ENCODE measurements at regions of chr6 and their contacts with region 1.

Region 1: DNA sequence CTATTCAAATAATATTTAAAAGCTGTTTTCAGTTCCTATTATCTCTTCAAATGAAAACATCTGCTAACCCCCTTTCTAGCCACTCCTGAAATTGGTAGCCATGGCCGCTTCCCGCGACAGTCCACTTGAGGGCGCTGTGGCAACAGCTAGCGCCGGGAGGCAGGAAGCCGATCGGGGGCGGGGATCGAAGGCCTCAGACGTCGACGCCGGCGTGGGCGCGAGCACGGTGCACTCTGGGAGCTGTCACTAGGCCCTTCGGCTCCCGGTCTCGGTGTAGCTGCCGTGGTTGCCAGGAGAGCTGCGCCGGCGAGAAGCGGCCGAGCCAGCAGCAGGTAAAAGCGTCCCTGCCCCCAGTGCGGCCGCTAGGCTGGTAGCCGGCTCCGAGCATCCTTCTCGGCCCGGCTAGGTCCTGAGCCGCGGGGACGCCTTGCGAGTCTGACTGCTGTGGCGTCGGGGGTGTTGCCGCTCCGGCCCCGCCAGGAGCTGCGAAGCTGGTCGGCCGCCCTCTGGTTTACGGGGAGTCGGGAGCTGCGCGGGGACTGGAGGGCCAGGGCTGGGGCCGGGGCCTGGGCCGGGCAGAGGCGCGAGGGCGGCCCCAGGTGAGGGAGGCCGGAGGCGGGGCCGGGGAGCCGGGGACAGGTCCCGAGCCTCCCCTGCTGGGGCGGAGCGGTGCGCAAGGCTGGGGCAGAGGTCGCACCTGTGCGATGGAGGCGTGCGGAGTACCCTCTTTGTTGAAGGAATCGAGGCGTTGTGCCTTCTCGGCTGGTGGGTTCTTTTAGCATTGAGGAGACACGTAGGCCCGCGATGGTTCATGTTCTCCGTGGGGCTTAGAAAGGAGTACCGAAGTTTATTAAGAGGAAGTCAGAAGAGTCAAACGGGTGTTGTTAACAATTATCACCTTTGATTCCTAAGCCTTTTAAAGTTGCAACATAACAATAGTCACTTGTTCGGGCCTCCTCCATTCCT is at the start of gene DOP1A:
- DNase-seq: peak; percentile 95
- H3K4me3 ChIP-seq: peak within 1 kb of the TSS; percentile 96
- H3K4me3 Mint-ChIP-seq: peak within 1 kb of the TSS; percentile 87
- H3K27ac Mint-ChIP-seq: peak within 1 kb of the TSS; percentile 85
- H3K4me1 ChIP-seq: peaks cover 5% of the 10 kb centered on the region; the same call in 1 of the 2 replicates
- H3K4me1 Mint-ChIP-seq: peaks cover 5% of the 10 kb centered on the region
- H3K27me3 ChIP-seq: no peaks in the 10 kb centered on the region
- H3K27me3 Mint-ChIP-seq: no peaks in the 10 kb centered on the region
- CTCF ChIP-seq: peak; percentile 82 to 95
- total RNA-seq, gene DOP1A: 14.6 and 16.1 TPM in 2 replicates

Region 2: GRCh38 chr6:82247634-82248232 is 820.0 kb before region 1 on chr6 and contains the start of gene IBTK:
- CTCF ChIA-PET with region 1: interaction called, 4 read pairs
- POLR2A ChIA-PET with region 1: no interaction called
- intact Hi-C with region 1: loop called (anchors 5 kb)
- DNase-seq: peak; percentile 95 to 97
- H3K4me3 ChIP-seq: peak within 1 kb of the TSS; percentile 74
- H3K4me3 Mint-ChIP-seq: peak within 1 kb of the TSS; percentile 90
- H3K27ac Mint-ChIP-seq: peak within 1 kb of the TSS; percentile 96
- H3K4me1 ChIP-seq: peaks cover 28% of the 10 kb centered on the region
- H3K4me1 Mint-ChIP-seq: peaks cover 20% of the 10 kb centered on the region
- H3K27me3 ChIP-seq: no peaks in the 10 kb centered on the region
- H3K27me3 Mint-ChIP-seq: no peaks in the 10 kb centered on the region
- CTCF ChIP-seq: no peak
- total RNA-seq, gene IBTK: 29.4 and 30.3 TPM in 2 replicates

Region 3: DNA sequence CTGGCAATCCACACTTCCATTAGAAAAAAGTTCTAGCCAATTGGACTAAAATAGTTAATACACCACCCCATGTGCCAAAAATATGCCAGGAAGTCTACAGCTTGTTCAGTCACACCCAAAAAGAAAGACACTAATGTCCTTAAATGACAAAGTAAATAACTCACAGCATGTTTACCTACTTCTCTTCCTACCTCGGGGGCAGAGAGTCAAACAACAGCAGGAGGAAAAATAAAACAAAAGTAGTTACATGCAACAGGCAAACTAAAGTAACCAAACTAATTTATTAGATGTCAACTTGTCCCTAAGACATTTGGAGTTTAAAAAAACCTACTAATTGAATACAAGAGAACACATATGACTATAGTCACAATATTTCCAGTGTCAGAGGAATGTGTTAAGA is 59.1 kb before region 1 on chr6:
- CTCF ChIA-PET with region 1: no interaction called
- POLR2A ChIA-PET with region 1: no interaction called
- intact Hi-C with region 1: no loop called
- DNase-seq: no peak
- H3K4me3 ChIP-seq: no peak overlapping the region
- H3K4me3 Mint-ChIP-seq: no peak overlapping the region
- H3K27ac Mint-ChIP-seq: no peak overlapping the region
- H3K4me1 ChIP-seq: no peaks in the 10 kb centered on the region
- H3K4me1 Mint-ChIP-seq: peaks cover 12% of the 10 kb centered on the region
- H3K27me3 ChIP-seq: no peaks in the 10 kb centered on the region
- H3K27me3 Mint-ChIP-seq: no peaks in the 10 kb centered on the region
- CTCF ChIP-seq: no peak

Region 4: DNA sequence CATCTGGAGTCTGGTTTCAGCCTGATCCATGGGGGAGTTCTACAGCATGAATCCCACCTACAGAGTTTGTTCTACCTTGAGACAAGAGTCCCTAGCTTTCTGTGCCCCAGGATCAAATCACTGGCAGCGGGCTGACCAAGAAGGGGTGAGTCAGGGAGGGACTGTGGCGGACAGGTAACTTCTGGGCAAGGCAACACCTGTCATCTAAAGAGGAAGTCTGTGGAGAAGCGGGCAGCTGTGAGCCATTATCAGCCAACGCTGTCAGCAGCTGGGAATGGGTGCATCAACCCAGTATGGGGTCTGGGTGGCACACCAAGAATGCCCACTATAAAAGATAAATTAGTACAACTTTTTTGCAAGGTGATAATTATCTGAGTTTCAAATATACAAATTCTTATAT is 48.0 kb before region 1 on chr6:
- CTCF ChIA-PET with region 1: no interaction called
- POLR2A ChIA-PET with region 1: no interaction called
- intact Hi-C with region 1: no loop called
- DNase-seq: no peak
- H3K4me3 ChIP-seq: no peak overlapping the region
- H3K4me3 Mint-ChIP-seq: no peak overlapping the region
- H3K27ac Mint-ChIP-seq: no peak overlapping the region
- H3K4me1 ChIP-seq: no peaks in the 10 kb centered on the region
- H3K4me1 Mint-ChIP-seq: no peaks in the 10 kb centered on the region
- H3K27me3 ChIP-seq: no peaks in the 10 kb centered on the region
- H3K27me3 Mint-ChIP-seq: no peaks in the 10 kb centered on the region
- CTCF ChIP-seq: no peak

Region 5: GRCh38 chr6:83138118-83138722 is 70.5 kb after region 1 on chr6:
- CTCF ChIA-PET with region 1: no interaction called
- POLR2A ChIA-PET with region 1: no interaction called
- intact Hi-C with region 1: loop called (anchors 1 kb)
- DNase-seq: no peak
- H3K4me3 ChIP-seq: no peak overlapping the region
- H3K4me3 Mint-ChIP-seq: no peak overlapping the region
- H3K27ac Mint-ChIP-seq: no peak overlapping the region
- H3K4me1 ChIP-seq: peaks cover 16% of the 10 kb centered on the region
- H3K4me1 Mint-ChIP-seq: peaks cover 8% of the 10 kb centered on the region
- H3K27me3 ChIP-seq: no peaks in the 10 kb centered on the region
- H3K27me3 Mint-ChIP-seq: no peaks in the 10 kb centered on the region
- CTCF ChIP-seq: no peak

Region 6: GRCh38 chr6:83192871-83193746 is 125.4 kb after region 1 on chr6 and contains the starts of genes PGM3 and RWDD2A:
- CTCF ChIA-PET with region 1: interaction called, 4 read pairs
- POLR2A ChIA-PET with region 1: interaction called, 3 read pairs
- intact Hi-C with region 1: loop called (anchors 1 kb)
- DNase-seq: peak; percentile 89 to 94
- H3K4me3 ChIP-seq: peak within 1 kb of the TSS; percentile 97
- H3K4me3 Mint-ChIP-seq: peak within 1 kb of the TSS; percentile 90
- H3K27ac Mint-ChIP-seq: peak within 1 kb of the TSS; percentile 92
- H3K4me1 ChIP-seq: peaks cover 24% of the 10 kb centered on the region
- H3K4me1 Mint-ChIP-seq: peaks cover 16% of the 10 kb centered on the region
- H3K27me3 ChIP-seq: no peaks in the 10 kb centered on the region
- H3K27me3 Mint-ChIP-seq: no peaks in the 10 kb centered on the region
- CTCF ChIP-seq: no peak
- total RNA-seq, gene PGM3: 96.4 and 97.0 TPM in 2 replicates
- total RNA-seq, gene RWDD2A: 3.5 and 3.6 TPM in 2 replicates

Region 7: DNA sequence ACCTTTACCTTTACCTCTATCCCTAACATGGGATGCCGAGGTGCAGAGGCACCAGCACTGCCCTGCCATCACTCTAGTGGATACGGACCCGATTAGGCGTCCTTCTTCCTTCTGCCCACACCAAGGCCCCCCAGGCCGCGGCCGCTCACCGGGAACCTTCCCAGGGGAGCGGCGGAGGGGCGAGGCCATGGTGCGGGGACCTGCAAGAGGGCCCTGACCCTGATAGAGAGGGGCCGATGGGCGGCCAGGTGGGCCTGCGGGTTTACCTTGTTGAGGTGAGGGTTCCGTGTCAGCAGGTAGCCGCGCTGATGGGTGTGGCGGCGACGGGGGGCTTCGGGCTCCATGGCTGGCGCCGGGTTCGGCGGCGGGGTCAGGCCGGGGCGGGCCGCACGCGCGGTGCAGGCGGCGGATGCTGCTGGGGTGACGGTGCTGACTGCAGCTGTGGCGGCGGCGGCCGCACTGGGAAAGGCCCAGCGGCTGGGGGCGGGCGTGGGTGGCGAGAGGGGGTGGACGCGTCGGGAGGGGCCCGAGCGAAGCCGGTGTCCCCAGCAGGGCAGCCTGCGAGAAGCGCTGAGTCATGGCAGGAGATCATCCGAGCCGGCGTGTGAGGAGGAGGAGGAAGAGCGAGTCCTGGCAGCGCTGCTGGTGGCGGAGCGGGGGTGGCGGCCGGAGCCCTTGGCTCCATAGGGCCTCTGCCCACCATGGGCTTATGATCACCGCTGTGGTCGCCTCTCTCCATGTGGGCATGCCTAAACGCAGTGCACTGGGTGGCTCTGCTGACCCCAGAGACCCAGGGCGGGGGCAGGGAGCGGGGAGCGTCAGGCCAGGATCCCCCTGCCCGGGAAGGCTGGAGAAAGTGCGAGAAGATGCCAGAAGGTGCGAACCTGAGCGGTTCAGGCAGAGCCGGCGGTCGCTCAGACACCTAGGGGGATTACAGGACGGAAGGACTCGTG is 363.2 kb after region 1 on chr6 and contains the start of gene ME1:
- CTCF ChIA-PET with region 1: no interaction called
- POLR2A ChIA-PET with region 1: no interaction called
- intact Hi-C with region 1: loop called (anchors 2 kb)
- DNase-seq: peak; percentile 91 to 94
- H3K4me3 ChIP-seq: peak within 1 kb of the TSS; percentile 79
- H3K4me3 Mint-ChIP-seq: peak within 1 kb of the TSS; percentile 100
- H3K27ac Mint-ChIP-seq: peak within 1 kb of the TSS; percentile 99
- H3K4me1 ChIP-seq: peaks cover 41% of the 10 kb centered on the region
- H3K4me1 Mint-ChIP-seq: peaks cover 25% of the 10 kb centered on the region
- H3K27me3 ChIP-seq: no peaks in the 10 kb centered on the region
- H3K27me3 Mint-ChIP-seq: no peaks in the 10 kb centered on the region
- CTCF ChIP-seq: no peak
- total RNA-seq, gene ME1: 121 and 131 TPM in 2 replicates

Region 8: DNA sequence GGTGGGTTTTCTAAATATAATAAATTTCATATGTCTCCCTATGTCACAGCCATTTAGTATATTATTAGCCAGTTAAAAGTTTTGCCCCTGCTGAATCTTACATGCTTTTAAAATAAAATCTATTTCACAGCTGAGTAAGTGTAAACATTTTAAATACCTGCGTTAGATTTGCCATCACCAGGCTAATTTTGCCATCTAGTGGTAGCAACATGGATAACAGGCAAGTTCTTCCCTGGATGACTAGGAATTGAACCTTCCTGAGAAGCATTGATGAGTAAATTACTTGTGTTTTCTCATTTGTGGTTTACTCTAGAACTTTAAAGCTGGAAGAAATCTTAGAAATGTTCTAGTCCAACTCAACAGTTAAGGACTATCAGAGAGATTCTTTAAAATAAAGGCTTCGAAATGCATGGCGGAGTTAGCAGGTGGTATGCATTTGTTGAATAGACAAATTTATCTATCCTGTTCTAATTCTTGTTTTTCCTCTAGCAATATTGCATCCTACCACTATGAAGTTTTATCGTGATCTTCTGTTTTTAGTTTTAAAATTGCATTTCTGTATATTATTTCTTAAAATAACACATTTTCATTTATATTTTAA is 447.2 kb after region 1 on chr6:
- CTCF ChIA-PET with region 1: interaction called, 8 read pairs
- POLR2A ChIA-PET with region 1: interaction called, 3 read pairs
- intact Hi-C with region 1: loop called (anchors 1 kb)
- DNase-seq: peak; percentile 46 to 67
- H3K4me3 ChIP-seq: no peak overlapping the region
- H3K4me3 Mint-ChIP-seq: peak overlapping the region; percentile 84
- H3K27ac Mint-ChIP-seq: no peak overlapping the region
- H3K4me1 ChIP-seq: peaks cover 19% of the 10 kb centered on the region
- H3K4me1 Mint-ChIP-seq: peaks cover 25% of the 10 kb centered on the region
- H3K27me3 ChIP-seq: no peaks in the 10 kb centered on the region
- H3K27me3 Mint-ChIP-seq: no peaks in the 10 kb centered on the region
- CTCF ChIP-seq: peak; percentile 76 to 86